ENCODE measurements at regions of chr2 and their contacts with region 1.

Region 1: GRCh38 chr2:64586883-64587481 is 62.9 kb downstream of the AFTPH start:
- DNase-seq: peak; percentile 69
- H3K4me3 ChIP-seq: no peak overlapping the region
- H3K27ac ChIP-seq: no peak overlapping the region
- H3K4me1 ChIP-seq: peaks cover 8% of the 10 kb centered on the region
- H3K27me3 ChIP-seq: no peaks in the 10 kb centered on the region
- CTCF ChIP-seq: peak; percentile 35 to 54
- POLR2A ChIP-seq: no peak

Region 2: GRCh38 chr2:64609227-64609941 is 22.4 kb after region 1 on chr2:
- CTCF ChIA-PET with region 1: interaction called, 18 read pairs
- POLR2A ChIA-PET with region 1: no interaction called
- dilution Hi-C with region 1: no loop called
- intact Hi-C with region 1: no loop called
- DNase-seq: peak; percentile 31
- H3K4me3 ChIP-seq: peak overlapping the region in 2 of 3 experiments; percentile 30 to 39
- H3K27ac ChIP-seq: no peak overlapping the region
- H3K4me1 ChIP-seq: no peaks in the 10 kb centered on the region
- H3K27me3 ChIP-seq: peaks cover 0 to 2% of the 10 kb centered on the region in 2 experiments
- CTCF ChIP-seq: peak; percentile 14 to 49
- POLR2A ChIP-seq: no peak

Region 3: DNA sequence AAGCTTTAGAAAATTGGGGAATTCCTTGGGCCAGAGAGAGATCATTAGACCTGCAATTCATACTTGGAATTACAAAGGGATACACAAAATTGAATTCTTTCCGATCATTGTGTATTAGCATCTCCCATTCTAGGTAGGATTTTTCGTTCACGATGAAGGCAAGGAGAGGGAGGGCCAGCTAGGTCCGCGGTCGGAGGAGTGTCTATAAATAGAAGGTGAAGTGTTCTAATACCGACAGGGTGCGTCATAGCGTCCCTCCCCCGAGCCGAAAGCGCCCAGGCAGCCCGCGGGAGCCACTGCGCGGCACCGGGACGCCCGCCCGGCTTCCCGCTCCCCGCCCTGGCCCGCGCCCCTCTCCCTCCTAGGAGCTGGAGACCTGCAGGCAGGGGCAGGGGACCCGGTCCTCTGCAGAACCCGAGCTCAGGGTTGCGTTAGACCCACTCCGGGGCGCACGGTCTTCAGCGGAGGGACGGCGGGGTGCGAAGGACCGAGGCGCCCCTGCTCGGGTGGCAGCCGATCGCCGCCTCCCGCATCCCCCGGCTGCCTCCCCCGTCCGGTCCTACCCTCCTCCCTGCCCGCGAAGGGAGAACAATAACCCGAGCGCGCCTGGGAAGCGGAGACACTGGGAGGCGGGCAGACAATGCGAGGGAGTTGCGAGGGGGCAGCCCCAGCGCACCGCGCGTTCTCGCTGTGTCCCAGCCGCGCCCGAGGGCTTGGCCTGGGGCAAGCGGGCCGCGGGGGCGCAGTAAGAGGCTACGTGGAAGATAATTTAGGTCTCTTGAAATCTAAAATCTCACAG is 180.9 kb after region 1 on chr2:
- CTCF ChIA-PET with region 1: interaction called, 7 read pairs
- POLR2A ChIA-PET with region 1: no interaction called
- dilution Hi-C with region 1: no loop called
- intact Hi-C with region 1: loop called (anchors 1 kb)
- DNase-seq: peak; percentile 87
- H3K4me3 ChIP-seq: peak overlapping the region; percentile 57 to 80 (median 75)
- H3K27ac ChIP-seq: peak overlapping the region; percentile 87
- H3K4me1 ChIP-seq: peaks cover 12% of the 10 kb centered on the region
- H3K27me3 ChIP-seq: no peaks in the 10 kb centered on the region
- CTCF ChIP-seq: no peak
- POLR2A ChIP-seq: peak; percentile 76

Region 4: DNA sequence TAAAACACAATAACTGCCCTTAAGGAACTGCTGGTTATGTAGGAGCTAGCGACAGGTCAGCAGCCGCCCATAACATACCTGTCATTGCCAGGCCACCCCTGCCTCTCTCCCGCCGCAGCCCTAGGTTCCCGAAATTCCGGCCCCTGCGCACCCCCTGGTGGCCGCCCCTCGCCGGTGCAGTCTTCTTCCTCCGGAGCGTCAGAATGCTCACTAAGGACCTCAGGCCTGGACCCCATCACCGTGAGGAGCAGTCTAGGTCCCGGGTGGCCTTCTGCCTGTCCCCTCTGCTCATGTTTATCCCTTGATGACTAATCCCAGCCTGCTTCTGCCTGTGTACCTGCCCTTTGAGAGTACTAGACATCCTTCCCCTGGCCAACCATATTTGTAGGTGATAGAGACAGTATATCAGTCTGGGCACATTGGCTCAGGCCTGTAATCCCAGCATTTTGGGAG is 286.5 kb after region 1 on chr2:
- CTCF ChIA-PET with region 1: interaction called, 26 read pairs
- POLR2A ChIA-PET with region 1: no interaction called
- dilution Hi-C with region 1: no loop called
- intact Hi-C with region 1: loop called (anchors 1 kb)
- DNase-seq: peak; percentile 63
- H3K4me3 ChIP-seq: no peak overlapping the region
- H3K27ac ChIP-seq: no peak overlapping the region
- H3K4me1 ChIP-seq: peaks cover 10% of the 10 kb centered on the region
- H3K27me3 ChIP-seq: no peaks in the 10 kb centered on the region
- CTCF ChIP-seq: peak; percentile 95 to 96
- POLR2A ChIP-seq: no peak

Region 5: DNA sequence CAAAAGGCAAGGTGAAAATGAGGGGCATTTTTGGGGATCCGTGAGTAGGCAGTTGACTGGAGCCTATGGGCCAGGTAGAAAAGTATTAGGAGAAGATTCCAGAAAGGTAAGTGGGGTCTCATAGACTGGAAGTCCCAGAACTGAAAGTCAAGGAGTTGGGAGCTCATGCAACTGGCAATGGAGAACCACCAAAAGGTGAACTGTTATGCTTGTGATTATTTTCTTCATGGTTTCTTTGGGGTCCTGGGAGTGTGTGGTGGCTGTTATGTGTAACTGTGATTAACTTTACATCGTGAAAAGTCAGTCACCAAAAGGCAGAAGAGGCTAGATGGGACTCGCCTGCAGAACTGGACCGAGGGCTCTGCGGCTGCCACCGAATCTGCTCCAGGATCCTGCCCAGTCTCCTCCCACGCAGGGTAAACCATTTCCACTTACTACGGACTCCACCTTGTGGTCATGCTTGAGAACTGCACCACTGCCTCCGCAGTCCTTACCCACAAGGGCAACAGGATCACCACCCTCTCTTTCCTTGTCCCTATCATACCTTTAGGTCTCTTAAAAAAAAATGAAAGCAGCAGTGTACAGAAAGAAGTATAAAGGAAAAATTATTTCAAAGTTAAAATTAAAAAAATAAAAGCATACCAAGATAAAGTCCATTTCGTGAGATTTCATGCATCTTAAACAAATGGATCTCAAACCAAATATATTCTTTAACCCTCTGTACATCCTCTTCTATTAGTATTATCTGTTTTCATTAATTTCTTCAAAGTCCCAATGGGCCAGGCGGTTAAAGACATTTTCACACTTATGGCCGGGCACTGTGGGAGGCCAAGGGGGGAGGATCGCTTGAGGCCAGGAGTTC is 453.6 kb after region 1 on chr2:
- CTCF ChIA-PET with region 1: interaction called, 4 read pairs
- POLR2A ChIA-PET with region 1: no interaction called
- dilution Hi-C with region 1: no loop called
- intact Hi-C with region 1: loop called (anchors 2 kb)
- DNase-seq: peak; percentile 83
- H3K4me3 ChIP-seq: no peak overlapping the region
- H3K27ac ChIP-seq: no peak overlapping the region
- H3K4me1 ChIP-seq: peaks cover 11% of the 10 kb centered on the region
- H3K27me3 ChIP-seq: no peaks in the 10 kb centered on the region
- CTCF ChIP-seq: peak; percentile 82 to 91
- POLR2A ChIP-seq: no peak